ENCODE measurements at regions of chr20 and their contacts with region 1.

Region 1: GRCh38 chr20:16573001-16573965 is at the start of gene KIF16B:
- DNase-seq: peak; percentile 89
- H3K4me3 Mint-ChIP-seq: peak within 1 kb of the TSS; percentile 88
- H3K27ac Mint-ChIP-seq: peak within 1 kb of the TSS; percentile 79
- H3K4me1 Mint-ChIP-seq: peaks cover 35% of the 10 kb centered on the region
- H3K27me3 Mint-ChIP-seq: no peaks in the 10 kb centered on the region
- total RNA-seq, gene KIF16B: 5.1 to 5.6 TPM

Region 2: GRCh38 chr20:16544949-16545348 is 28.3 kb before region 1 on chr20:
- CTCF ChIA-PET with region 1: no interaction called
- intact Hi-C with region 1: loop called (anchors 2 kb)
- DNase-seq: peak; percentile 55
- H3K4me3 Mint-ChIP-seq: no peak overlapping the region
- H3K27ac Mint-ChIP-seq: no peak overlapping the region
- H3K4me1 Mint-ChIP-seq: peaks cover 11% of the 10 kb centered on the region
- H3K27me3 Mint-ChIP-seq: no peaks in the 10 kb centered on the region

Region 3: DNA sequence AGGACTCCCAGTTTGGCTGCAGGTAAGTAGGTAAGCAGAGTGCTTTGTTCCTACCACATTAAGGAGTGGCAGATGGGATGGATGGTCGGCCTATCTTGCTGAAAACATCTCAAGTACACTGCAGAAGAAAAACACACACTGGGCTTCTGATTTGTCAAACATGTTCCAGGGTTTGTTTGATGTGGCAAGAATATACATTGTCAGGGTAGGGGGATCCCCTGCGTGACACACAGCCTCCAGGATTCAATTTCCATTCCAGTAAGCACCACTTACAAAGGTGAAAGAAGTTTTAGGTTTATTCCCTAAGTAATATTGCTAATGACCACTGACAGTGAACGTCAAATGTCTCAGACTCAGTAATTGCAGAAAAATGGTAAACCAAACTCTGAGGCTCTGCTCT is 26.0 kb after region 1 on chr20:
- CTCF ChIA-PET with region 1: no interaction called
- intact Hi-C with region 1: loop called (anchors 1 kb)
- DNase-seq: peak; percentile 65
- H3K4me3 Mint-ChIP-seq: no peak overlapping the region
- H3K27ac Mint-ChIP-seq: no peak overlapping the region
- H3K4me1 Mint-ChIP-seq: peaks cover 7% of the 10 kb centered on the region
- H3K27me3 Mint-ChIP-seq: peaks cover 10% of the 10 kb centered on the region

Region 4: GRCh38 chr20:16729565-16730456 is 156.5 kb after region 1 on chr20 and contains the start of gene SNRPB2:
- CTCF ChIA-PET with region 1: no interaction called
- intact Hi-C with region 1: loop called (anchors 1 kb)
- DNase-seq: peak; percentile 95
- H3K4me3 Mint-ChIP-seq: peak within 1 kb of the TSS; percentile 99
- H3K27ac Mint-ChIP-seq: peak within 1 kb of the TSS; percentile 98
- H3K4me1 Mint-ChIP-seq: peaks cover 45% of the 10 kb centered on the region
- H3K27me3 Mint-ChIP-seq: peaks cover 6% of the 10 kb centered on the region
- total RNA-seq, gene SNRPB2: 93.1 to 99.8 TPM